Heart right ventricle (tissue), 16 donors: ENCODE measurements at regions of chr16 and their contacts with region 1.

Region 1: GRCh38 chr16:69294051-69294450 is 17.1 kb upstream of the VPS4A start:
- DNase-seq: no peak
- ATAC-seq: no peak
- H3K4me3 ChIP-seq: no peak overlapping the region
- H3K27ac ChIP-seq: no peak overlapping the region
- H3K4me1 ChIP-seq: peaks cover 0 to 6% (median 0%) of the 10 kb centered on the region in 9 donors
- H3K27me3 ChIP-seq: no peaks in the 10 kb centered on the region
- CTCF ChIP-seq: no peak

Region 2: DNA sequence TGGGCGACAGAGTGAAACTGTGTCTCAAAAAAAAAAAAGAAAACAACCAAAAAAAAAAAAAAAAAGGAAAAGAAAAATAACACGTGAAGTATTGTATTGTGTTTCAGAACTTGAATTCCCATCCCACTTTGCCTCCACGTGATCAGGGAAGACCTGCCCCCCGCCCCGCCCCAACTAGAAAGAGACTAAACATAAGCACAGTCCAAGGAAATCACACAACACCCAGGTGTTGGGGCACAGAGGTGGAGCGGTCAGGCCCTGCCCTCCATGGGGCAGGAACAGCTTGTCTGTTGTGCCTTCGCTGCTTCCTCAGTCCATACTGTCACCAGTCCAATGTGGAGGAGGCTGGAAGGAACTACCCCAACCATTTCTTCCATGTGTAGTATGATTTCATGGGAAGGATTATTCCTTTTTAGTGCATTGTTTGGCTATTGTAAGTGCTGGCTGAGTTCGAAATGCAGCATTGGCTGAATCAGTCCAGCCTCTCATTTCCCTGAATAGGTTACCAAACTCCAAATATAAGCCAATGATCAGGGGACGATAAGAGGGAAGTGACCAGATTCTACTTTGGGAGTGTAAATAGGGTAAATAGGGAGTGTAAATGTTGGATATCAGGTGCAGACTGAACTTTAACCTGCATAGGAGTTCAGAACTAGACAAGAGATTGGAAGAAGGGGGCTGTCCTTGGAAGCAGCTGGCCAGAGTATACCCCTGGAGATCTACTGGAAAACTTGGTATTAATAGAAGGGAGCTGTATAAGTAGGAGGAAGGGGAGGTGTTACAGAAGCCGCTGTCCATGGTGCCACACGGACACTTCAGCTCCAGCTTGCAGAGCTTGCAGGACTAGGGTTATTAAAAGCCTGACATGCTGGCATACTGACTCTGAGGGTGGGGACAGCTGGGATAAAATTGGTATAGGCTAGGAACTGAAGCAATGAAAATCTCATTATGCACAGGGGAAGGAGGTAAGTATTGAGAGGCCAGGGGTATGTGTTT is 400.0 kb before region 1 on chr16:
- intact Hi-C with region 1: loop called in 1 of 10 experiments (anchors 5 kb)
- DNase-seq: peak; percentile 30 to 33
- ATAC-seq: peak; percentile 49 to 95 (median 84)
- H3K4me3 ChIP-seq: no peak overlapping the region
- H3K27ac ChIP-seq: no peak overlapping the region
- H3K4me1 ChIP-seq: peaks cover 0 to 11% (median 0%) of the 10 kb centered on the region in 9 donors
- H3K27me3 ChIP-seq: no peaks in the 10 kb centered on the region
- CTCF ChIP-seq: no peak

Region 3: DNA sequence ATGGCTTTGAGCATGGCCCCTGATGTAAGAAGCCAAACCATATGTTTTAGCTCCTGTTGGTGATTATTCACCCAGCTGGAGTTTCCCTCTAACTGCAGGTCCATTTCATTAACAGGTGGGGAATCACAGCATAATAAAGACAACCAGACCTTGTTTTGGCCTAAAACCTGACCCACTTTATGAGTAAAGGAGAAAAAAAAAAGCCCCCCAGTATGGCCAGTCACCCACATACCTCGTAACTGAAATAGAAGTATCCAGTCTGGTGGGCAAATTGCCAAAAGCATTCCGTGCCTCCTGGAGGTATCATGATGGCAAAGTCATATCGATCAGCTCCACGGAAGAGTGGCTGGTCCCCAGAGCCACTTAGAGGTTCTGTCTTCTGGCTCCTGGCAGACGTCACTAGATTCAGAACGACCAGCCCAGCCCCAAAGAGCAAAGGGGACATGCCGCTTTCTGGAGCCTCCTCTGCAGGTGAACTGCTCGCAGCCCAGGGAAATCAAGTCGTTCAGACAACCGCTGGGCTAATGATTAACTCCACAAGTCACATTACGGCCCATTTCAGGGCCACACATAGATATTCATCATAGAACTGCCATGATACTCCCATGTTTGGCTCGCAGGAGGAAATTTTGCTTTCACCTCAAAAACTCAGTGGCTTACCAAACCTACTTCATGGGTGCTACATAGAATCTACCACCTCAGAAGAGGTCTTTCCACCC is 57.4 kb after region 1 on chr16 and contains the start of gene TMED6:
- intact Hi-C with region 1: no loop called
- DNase-seq: no peak
- ATAC-seq: no peak
- H3K4me3 ChIP-seq: no peak within 1 kb of the TSS
- H3K27ac ChIP-seq: no peak within 1 kb of the TSS
- H3K4me1 ChIP-seq: peaks cover 0 to 6% (median 0%) of the 10 kb centered on the region in 9 donors
- H3K27me3 ChIP-seq: no peaks in the 10 kb centered on the region
- CTCF ChIP-seq: no peak
- total RNA-seq, gene TMED6: 0.32 to 0.41 (median 0.38) TPM in 4 of 10 donors, not detected in the others